ENCODE measurements at regions of chr17 and their contacts with region 1.

Region 1: GRCh38 chr17:82212331-82213250 is at the start of gene CCDC57:
- DNase-seq: peak in 1 of 2 experiments; percentile 88
- H3K4me3 ChIP-seq: peak within 1 kb of the TSS; percentile 56 to 98 (median 62)
- H3K27ac ChIP-seq: no peak within 1 kb of the TSS
- H3K4me1 ChIP-seq: peaks cover 0 to 4% (median under 1%) of the 10 kb centered on the region in 4 experiments; a peak in 2 of 7 replicates
- H3K27me3 ChIP-seq: peaks cover 2 to 21% (median 13%) of the 10 kb centered on the region in 4 experiments
- CTCF ChIP-seq: no peak
- EP300 ChIP-seq: peak in 1 of 2 experiments; percentile 27; a peak in 1 of 3 replicates
- POLR2A ChIP-seq: no peak
- RAD21 ChIP-seq: no peak
- total RNA-seq, gene CCDC57: 12.6 and 12.9 TPM in 2 replicates

Region 2: DNA sequence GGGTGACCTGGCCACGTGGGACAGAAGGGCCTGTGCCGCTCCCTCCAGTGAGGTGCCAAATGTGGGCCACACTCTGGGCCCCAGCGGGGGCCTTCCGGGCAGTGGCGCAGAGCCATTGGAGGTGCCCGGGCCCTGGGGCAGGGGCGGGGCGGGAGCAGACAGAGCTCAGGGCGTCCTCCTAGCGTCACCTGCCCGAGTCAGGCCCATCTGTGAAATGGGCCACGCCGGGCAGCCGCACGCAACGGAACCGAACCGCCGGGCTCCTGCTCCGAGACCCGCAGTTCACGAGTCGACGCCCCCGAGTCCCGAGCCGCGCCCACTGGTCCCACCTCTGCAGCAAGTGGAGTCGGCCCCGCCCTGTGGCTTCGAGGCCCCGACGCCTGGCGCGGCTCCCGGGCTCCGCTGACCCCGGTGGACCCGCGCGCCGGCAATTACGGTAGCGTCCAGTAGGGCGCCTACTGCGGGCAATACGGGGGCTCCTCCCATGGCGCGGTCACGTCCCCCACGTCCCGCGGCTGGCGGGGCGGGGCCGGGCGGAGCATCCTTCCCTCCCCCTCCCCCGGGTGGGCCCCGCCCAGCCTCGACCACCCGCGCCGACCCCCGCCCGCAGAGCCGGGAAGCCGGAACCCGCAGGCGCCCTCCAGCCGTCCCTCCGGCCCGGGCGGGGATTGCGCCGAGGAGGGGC is 18.2 kb after region 1 on chr17:
- CTCF ChIA-PET with region 1: interaction called, 3 read pairs
- POLR2A ChIA-PET with region 1: interaction called, 11 read pairs
- DNase-seq: no peak
- H3K4me3 ChIP-seq: peak overlapping the region; percentile 38 to 65 (median 43); a peak in 7 of 8 replicates
- H3K27ac ChIP-seq: no peak overlapping the region
- H3K4me1 ChIP-seq: peaks cover 0 to 18% (median 4%) of the 10 kb centered on the region in 4 experiments; a peak in 6 of 7 replicates
- H3K27me3 ChIP-seq: peaks cover 28 to 68% (median 57%) of the 10 kb centered on the region in 4 experiments
- CTCF ChIP-seq: peak; percentile 13 to 37 (median 32); a peak in 3 of 4 replicates
- EP300 ChIP-seq: no peak
- POLR2A ChIP-seq: no peak
- RAD21 ChIP-seq: no peak